ENCODE measurements at regions of chr20 and their contacts with region 1.

Region 1: GRCh38 chr20:37081717-37082289 is 14.0 kb downstream of the RBL1 start:
- DNase-seq: no peak
- H3K4me3 Mint-ChIP-seq: no peak overlapping the region
- H3K27ac Mint-ChIP-seq: no peak overlapping the region
- H3K4me1 Mint-ChIP-seq: no peaks in the 10 kb centered on the region
- H3K27me3 Mint-ChIP-seq: no peaks in the 10 kb centered on the region
- CTCF ChIP-seq: peak; percentile 13

Region 2: GRCh38 chr20:36439040-36439730 is 642.6 kb before region 1 on chr20:
- CTCF ChIA-PET with region 1: no interaction called
- POLR2A ChIA-PET with region 1: no interaction called
- intact Hi-C with region 1: no loop called
- DNase-seq: peak; percentile 61
- H3K4me3 Mint-ChIP-seq: no peak overlapping the region
- H3K27ac Mint-ChIP-seq: no peak overlapping the region
- H3K4me1 Mint-ChIP-seq: no peaks in the 10 kb centered on the region
- H3K27me3 Mint-ChIP-seq: no peaks in the 10 kb centered on the region
- CTCF ChIP-seq: peak; percentile 96

Region 3: DNA sequence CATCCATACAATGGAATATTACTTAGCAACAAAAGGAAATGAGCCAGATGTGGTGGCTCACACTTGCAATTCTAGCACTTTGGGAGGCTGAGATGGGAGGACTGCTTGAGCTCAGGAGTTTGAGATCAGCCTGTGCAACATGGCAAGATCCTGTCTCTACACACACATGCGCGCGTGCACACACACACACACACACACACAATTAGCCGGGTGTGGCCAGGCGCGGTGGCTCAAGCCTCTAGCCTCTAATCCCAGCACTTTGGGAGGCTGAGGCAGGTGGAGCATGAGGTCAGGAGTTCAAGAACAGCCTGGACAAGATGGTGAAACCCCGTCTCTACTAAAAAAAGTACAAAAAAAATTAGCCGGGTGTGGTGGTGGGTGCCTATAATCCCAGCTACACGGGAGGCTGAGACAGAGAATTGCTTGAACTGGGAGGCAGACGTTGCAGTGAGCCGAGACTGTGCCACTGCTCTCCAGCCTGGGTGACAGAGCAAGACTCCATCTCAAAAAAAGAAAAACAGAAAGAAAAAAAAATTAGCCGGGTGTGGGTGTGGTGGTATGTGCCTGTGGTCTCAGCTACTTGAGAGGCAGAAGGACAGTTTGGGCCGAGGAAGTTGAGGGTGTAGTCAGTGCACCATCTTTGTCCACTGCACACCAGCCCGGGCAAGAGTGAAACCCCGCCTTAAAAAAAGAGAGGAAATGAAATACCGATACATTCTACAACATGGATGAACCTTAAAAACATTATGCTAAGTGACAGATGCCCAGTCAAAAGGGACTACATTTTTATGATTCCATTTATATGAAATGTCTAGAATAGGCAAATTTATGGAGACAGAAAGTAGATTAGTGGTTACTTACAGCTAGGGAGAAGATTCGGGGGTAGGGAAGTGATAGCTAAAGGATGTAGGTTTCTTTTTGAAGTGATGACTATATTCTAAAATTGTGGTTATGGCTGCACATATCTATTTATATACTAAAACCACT is 38.5 kb before region 1 on chr20:
- CTCF ChIA-PET with region 1: no interaction called
- POLR2A ChIA-PET with region 1: interaction called, 3 read pairs
- intact Hi-C with region 1: loop called (anchors 1 kb)
- DNase-seq: no peak
- H3K4me3 Mint-ChIP-seq: no peak overlapping the region
- H3K27ac Mint-ChIP-seq: no peak overlapping the region
- H3K4me1 Mint-ChIP-seq: no peaks in the 10 kb centered on the region
- H3K27me3 Mint-ChIP-seq: no peaks in the 10 kb centered on the region
- CTCF ChIP-seq: no peak